PC-9 (cell line): ENCODE measurements at regions of chr11 and their contacts with region 1.

Region 1: GRCh38 chr11:103903621-103904323 is 132.7 kb upstream of the DDI1 start:
- DNase-seq: no peak
- H3K4me3 ChIP-seq: no peak overlapping the region
- H3K27ac ChIP-seq: no peak overlapping the region
- H3K4me1 ChIP-seq: no peaks in the 10 kb centered on the region
- H3K27me3 ChIP-seq: no peaks in the 10 kb centered on the region
- CTCF ChIP-seq: no peak

Region 2: DNA sequence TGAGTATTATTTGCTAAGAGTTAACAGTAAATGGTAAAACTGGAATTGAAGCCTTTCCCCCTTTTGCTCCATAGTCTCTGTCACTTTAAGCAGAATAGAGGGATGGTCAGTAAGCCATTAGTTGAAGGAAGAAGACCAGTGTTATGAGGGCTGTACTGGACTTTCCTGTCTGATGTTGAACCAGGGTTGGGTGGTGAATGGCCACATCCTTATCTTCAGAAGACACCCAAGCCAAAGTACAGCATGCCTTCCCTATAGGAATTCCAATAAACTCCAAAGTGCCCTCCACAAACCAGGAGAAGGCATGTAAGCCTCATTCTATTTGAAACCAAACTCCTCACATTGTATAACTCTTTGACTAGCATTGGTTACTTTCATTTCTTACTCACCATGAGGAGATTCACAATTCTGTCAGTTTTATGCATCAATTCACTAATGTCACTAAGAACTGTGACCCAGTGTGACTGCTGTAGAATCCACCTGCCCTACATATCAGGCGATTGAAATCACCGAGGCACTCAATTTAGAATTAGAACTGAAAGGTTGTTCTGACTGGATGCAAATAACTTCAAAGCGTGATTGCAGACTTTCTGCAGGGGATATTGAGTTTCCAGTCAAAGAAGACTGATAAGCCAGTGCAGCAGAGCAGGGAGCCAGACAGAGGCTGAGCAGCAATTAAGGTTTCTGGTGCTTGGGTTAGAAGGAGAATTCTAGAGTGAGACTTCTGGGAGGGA is 25.6 kb after region 1 on chr11:
- CTCF ChIA-PET with region 1: no interaction called
- POLR2A ChIA-PET with region 1: no interaction called
- intact Hi-C with region 1: no loop called
- DNase-seq: peak in 1 of 2 experiments; percentile 29
- H3K4me3 ChIP-seq: no peak overlapping the region
- H3K27ac ChIP-seq: no peak overlapping the region
- H3K4me1 ChIP-seq: peaks cover 3% of the 10 kb centered on the region
- H3K27me3 ChIP-seq: no peaks in the 10 kb centered on the region
- CTCF ChIP-seq: no peak

Region 3: GRCh38 chr11:103939694-103940093 is 35.9 kb after region 1 on chr11:
- CTCF ChIA-PET with region 1: interaction called, 3 read pairs
- POLR2A ChIA-PET with region 1: interaction called, 16 read pairs
- intact Hi-C with region 1: no loop called
- DNase-seq: peak in 1 of 2 experiments; percentile 19
- H3K4me3 ChIP-seq: no peak overlapping the region
- H3K27ac ChIP-seq: no peak overlapping the region
- H3K4me1 ChIP-seq: peaks cover 23% of the 10 kb centered on the region
- H3K27me3 ChIP-seq: no peaks in the 10 kb centered on the region
- CTCF ChIP-seq: no peak

Region 4: GRCh38 chr11:103987629-103988594 is 84.1 kb after region 1 on chr11:
- CTCF ChIA-PET with region 1: no interaction called
- POLR2A ChIA-PET with region 1: no interaction called
- intact Hi-C with region 1: no loop called
- DNase-seq: no peak
- H3K4me3 ChIP-seq: no peak overlapping the region
- H3K27ac ChIP-seq: no peak overlapping the region
- H3K4me1 ChIP-seq: 0 out of 2 replicates have a peak, but pooled peaks cover 5% of the 10 kb centered on the region
- H3K27me3 ChIP-seq: no peaks in the 10 kb centered on the region
- CTCF ChIP-seq: no peak

Region 5: DNA sequence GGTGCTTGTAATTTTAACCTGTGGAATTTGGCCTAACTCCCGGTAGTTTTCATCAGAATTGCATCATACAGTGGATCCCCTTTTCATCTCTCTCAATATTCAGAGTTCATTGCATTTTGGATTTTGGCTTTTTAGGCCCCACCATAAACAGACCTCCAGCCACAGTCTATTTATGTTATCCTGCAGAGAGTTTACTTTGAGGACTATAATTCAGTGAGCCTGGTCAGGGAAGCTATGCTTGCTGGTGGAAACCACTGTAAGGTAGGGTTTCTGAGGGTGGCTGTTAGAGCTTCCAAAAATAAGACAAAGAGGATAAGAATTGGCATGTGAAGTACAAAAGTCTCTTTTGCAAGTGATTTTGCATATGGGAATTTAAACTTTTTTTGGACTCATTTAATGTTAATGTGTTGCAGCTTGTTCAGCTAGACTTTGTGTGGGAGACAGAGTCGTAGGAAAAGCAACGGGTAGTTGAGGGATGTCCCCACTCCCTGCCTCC is 97.8 kb after region 1 on chr11:
- CTCF ChIA-PET with region 1: no interaction called
- POLR2A ChIA-PET with region 1: no interaction called
- intact Hi-C with region 1: no loop called
- DNase-seq: no peak
- H3K4me3 ChIP-seq: no peak overlapping the region
- H3K27ac ChIP-seq: no peak overlapping the region
- H3K4me1 ChIP-seq: peaks cover 13% of the 10 kb centered on the region; the same call in 1 of the 2 replicates
- H3K27me3 ChIP-seq: no peaks in the 10 kb centered on the region
- CTCF ChIP-seq: no peak